Calu3 (cell line): ENCODE measurements at regions of chr4 and their contacts with region 1.

Region 1: DNA sequence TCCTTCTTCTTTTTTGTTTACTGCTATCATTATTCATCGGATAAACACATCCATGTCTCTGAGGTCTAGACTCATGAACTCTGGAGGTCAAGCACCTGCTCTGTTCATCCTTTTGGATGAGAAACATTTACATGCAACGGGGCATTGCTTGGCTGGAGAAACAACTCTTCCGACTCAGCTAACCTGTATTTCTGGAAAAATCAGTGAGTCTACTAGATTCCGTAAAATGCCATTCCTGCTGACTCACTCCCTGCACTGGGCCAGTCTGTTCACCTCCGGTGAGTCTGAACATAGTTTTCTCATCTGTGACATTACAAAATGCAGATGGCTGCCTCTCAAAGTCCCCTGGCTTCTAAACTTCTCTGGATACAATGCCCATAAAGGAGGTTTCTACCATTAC is 185.7 kb upstream of the HS3ST1 start:
- DNase-seq: peak; percentile 70
- H3K4me3 Mint-ChIP-seq: peak overlapping the region; percentile 31
- H3K27ac Mint-ChIP-seq: peak overlapping the region; percentile 89
- H3K4me1 Mint-ChIP-seq: peaks cover 82% of the 10 kb centered on the region
- H3K27me3 Mint-ChIP-seq: no peaks in the 10 kb centered on the region
- CTCF ChIP-seq: no peak

Region 2: GRCh38 chr4:11326021-11326420 is 288.4 kb before region 1 on chr4:
- CTCF ChIA-PET with region 1: no interaction called
- intact Hi-C with region 1: no loop called
- DNase-seq: no peak
- H3K4me3 Mint-ChIP-seq: no peak overlapping the region
- H3K27ac Mint-ChIP-seq: no peak overlapping the region
- H3K4me1 Mint-ChIP-seq: no peaks in the 10 kb centered on the region
- H3K27me3 Mint-ChIP-seq: no peaks in the 10 kb centered on the region
- CTCF ChIP-seq: no peak

Region 3: DNA sequence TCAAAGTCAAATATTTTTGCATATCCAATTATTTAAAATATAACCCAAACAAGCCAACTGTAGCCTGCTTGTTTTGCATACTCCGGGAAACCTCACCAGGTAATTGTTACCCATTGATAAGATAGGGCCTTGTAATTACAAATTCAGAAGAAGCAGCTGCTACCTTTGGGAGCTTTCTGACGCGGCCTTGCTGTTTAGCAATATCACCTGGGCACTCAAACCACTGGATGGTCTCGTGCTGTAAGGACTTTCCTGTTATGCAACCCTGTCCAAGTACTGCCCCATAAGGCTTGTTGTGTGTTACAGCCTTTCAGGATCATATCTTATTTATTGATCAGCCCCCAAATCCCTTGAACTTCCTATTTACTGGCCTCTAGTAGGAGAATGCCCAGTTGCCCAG is 237.8 kb before region 1 on chr4:
- CTCF ChIA-PET with region 1: no interaction called
- intact Hi-C with region 1: no loop called
- DNase-seq: no peak
- H3K4me3 Mint-ChIP-seq: no peak overlapping the region
- H3K27ac Mint-ChIP-seq: no peak overlapping the region
- H3K4me1 Mint-ChIP-seq: no peaks in the 10 kb centered on the region
- H3K27me3 Mint-ChIP-seq: no peaks in the 10 kb centered on the region
- CTCF ChIP-seq: no peak

Region 4: DNA sequence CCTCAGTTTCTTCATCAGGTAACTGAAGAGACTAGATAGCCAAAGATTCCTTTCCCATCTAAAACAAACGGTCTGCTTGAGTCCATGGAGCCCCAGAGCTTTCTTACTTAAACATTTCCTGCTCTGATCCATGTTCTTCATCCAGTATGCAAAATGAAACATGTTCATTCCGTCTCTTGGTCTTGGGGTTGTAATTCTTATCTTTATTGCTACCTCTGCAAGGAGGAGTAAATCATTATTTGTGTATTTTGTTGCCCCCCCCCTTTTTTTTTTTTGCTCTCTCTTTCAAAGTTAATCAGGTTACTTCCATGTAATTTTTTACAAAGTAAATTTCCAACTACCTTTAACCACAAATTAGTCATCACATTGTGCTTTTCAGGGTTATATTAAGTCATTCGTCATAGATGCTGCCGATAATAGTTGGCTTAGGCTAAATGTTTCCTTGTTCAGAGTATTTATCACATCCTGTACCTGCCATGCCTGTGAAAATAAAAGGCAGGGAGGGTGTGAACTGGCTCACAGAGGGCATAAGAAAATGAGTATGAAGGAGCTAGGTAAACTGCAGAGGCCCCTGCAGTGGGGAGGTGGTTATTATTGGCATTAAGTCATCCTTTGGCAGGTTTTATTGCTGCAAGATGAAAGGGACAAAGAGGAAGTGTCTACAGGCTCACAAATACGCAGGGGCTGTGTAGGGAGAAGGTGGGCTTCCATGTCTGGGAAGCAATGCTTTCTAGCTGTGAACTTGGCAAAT is 109.0 kb before region 1 on chr4:
- CTCF ChIA-PET with region 1: interaction called, 4 read pairs
- intact Hi-C with region 1: loop called (anchors 5 kb)
- DNase-seq: peak; percentile 69
- H3K4me3 Mint-ChIP-seq: peak overlapping the region; percentile 25
- H3K27ac Mint-ChIP-seq: peak overlapping the region; percentile 99
- H3K4me1 Mint-ChIP-seq: peaks cover 68% of the 10 kb centered on the region
- H3K27me3 Mint-ChIP-seq: no peaks in the 10 kb centered on the region
- CTCF ChIP-seq: no peak